IMR-90 (cell line): ENCODE measurements at regions of chr3 and their contacts with region 1.

Region 1: DNA sequence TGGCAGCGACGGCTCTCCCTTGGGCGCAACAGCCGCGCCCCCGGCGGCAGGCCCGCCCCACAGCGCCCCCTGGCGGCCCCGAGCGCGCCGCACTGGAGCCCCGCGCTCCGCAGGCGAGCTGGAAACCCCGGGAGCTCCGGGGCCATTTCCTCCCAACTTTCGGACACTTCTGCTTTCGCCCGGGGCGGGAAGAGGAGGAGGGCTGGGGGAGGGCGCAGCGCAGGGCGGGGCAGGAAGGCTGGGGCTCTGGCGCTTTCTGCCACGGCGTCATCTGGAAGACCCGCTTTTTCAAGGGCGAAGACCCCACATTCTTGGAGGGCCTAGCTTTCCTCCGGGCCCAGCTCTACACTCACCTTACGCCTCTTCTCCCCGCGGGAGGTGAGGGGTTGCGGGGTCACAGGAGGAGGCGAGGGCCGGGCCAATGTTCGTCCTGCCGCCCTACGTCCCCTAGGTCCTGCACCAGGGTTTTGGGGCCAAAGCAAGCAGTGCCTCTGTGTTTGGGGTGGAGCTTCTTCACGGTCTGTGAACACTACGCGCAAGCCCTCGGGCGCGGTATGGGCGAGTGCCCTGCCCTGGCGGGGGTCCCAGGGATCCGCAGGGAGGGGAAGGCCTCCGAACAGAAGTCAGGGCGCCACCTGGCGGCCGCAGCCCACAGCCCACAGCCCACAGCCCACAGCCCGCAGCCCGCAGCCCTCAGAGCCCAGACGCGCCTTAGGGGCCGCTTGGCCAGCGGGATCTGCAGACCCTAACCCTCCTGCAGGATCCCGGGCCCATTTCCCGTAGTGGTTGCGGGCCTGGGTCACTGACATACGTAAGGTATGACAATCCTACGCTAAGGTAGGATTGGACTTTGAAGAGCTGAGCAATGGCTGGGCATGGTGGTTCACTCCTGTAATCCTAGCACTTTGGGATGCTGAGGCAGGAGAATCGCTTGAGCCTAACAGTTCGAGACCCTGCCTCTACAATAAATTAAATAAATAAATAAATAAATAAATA is 31.1 kb downstream of the FOXL2 start:
- DNase-seq: peak; percentile 83
- ATAC-seq: peak; percentile 92
- H3K4me3 ChIP-seq: peak overlapping the region; percentile 96
- H3K27ac ChIP-seq: peak overlapping the region; percentile 99
- H3K4me1 ChIP-seq: peaks cover 4% of the 10 kb centered on the region
- H3K27me3 ChIP-seq: no peaks in the 10 kb centered on the region
- CTCF ChIP-seq: peak; percentile 97
- POLR2A ChIP-seq: no peak
- RAD21 ChIP-seq: peak; percentile 80

Region 2: DNA sequence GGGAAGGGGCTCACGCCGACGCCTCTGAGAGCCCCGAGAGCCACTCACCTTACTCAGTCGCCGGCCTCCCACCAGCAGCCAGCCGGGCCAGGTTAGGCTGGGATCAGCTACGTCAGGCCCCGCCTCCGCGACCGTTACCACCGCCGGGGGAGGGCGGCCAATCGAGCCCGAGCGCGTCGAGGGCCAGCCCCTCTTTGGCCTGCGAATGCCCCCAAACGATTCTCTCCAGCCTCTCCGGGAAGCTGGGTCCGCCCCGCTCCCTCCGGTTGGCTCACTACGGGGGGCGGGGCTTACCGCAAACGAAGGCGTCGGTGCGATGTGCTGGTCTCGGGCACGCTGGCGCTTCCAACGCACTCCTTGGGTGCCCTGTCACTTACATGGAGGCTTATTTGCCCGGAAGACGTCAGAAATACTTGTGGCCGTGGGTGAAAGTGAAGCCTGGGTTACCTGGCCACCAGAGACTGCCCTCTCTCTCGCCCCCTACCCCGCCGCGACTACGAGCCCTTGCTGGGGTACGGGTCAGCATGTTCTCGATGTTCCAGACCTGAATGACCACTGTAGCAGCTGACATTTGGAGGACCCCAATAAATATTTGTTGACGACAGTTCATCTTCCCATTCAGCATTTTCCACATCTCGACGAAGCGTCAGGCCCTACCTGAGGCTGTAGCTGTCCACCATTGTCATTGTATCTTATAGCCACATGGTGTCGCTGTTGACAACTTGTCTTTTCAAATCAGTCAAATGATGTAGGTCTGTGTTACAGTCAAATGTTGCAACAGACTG is 321.5 kb before region 1 on chr3 and contains the start of gene CEP70:
- CTCF ChIA-PET with region 1: interaction called, 42 read pairs
- POLR2A ChIA-PET with region 1: no interaction called
- dilution Hi-C with region 1: no loop called
- in situ Hi-C with region 1: loop called (anchors 5 kb)
- intact Hi-C with region 1: loop called (anchors 1 kb)
- DNase-seq: peak; percentile 95
- ATAC-seq: peak; percentile 99
- H3K4me3 ChIP-seq: peak within 1 kb of the TSS; percentile 54
- H3K27ac ChIP-seq: peak within 1 kb of the TSS; percentile 58
- H3K4me1 ChIP-seq: no peaks in the 10 kb centered on the region
- H3K27me3 ChIP-seq: no peaks in the 10 kb centered on the region
- CTCF ChIP-seq: peak; percentile 89
- POLR2A ChIP-seq: peak; percentile 76
- RAD21 ChIP-seq: peak; percentile 83
- total RNA-seq, gene CEP70: 11.1 and 21.4 TPM in 2 replicates

Region 3: DNA sequence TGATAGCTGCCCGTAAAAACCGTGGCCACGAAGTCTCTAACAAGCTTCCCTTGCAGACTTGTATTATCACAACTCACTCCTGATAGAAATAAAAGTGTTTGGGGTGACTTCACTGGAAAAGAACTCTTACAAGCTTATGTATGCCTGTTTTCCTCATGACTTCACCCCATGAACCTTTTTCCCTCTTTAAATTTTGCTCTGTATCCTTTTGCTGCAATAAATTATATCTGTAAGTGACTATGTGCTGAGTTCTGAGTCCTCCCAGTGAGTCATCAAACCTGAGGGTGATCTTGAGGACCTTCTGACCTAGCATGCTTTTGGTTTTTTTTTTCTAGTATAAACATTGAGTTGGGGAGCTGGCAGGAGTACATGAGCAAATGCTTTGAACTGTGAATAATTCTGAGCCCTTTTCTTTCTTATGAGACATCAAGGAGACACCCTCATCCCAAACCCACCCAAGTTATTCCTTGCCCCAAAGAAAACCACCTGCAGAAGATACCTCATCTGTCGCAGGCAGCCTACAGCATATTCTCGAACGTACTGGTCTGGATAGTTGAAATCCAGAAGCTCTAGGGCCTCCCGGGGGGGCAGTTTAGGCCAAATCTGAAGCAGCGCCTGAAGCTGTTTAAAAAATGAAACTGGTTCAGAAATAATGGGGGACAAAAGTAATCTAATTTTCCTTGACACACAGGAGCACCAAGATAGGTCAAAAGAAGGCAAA is 221.4 kb before region 1 on chr3:
- CTCF ChIA-PET with region 1: interaction called, 94 read pairs
- POLR2A ChIA-PET with region 1: interaction called, 7 read pairs
- dilution Hi-C with region 1: no loop called
- in situ Hi-C with region 1: loop called (anchors 5 kb)
- intact Hi-C with region 1: loop called (anchors 1 kb)
- DNase-seq: peak; percentile 99
- ATAC-seq: peak; percentile 96
- H3K4me3 ChIP-seq: no peak overlapping the region
- H3K27ac ChIP-seq: peak overlapping the region; percentile 61
- H3K4me1 ChIP-seq: peaks cover 4% of the 10 kb centered on the region
- H3K27me3 ChIP-seq: no peaks in the 10 kb centered on the region
- CTCF ChIP-seq: no peak
- POLR2A ChIP-seq: no peak
- RAD21 ChIP-seq: no peak

Region 4: DNA sequence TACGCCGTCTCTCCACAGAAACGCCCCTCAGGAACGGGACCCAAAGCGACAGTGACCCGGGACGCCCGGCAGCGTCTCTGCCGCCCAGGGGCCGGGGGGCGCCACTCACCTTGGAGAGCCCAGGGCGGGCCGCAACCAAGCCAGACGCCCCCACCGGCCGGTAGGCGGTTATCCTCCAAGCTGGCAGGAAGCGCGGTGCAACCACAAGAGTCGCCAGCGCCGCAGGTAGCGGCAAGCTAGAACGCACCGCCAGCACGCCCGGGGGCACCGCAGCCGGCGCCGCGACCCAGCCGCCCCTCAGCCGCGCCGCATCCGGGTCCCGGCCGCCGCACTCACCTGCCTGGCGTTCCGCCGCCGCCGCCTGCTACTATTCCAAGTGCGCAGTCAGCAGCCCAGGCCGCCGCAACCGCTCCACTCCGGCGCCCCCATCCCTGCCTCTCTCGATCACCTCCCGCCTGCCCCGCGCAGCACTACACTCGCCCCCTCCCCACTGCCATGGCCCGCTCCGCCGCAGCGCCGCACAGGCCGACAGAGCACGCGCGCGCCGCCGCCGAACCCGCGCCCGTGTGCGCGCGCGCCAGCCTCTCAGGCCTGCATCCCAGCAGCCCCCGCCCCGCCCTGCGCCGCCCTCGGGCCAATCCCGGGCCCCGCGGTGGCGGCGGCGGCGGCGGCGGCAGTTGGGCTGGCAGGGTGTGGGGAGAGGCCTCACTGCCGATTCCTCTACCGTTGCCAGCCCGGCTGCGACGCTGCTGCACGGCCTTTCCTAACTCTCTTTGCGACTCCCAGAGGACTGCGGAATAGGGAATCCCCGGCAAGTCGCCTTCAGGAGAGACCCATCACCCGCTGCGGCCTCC is 81.2 kb before region 1 on chr3 and contains the start of gene PIK3CB:
- CTCF ChIA-PET with region 1: no interaction called
- POLR2A ChIA-PET with region 1: no interaction called
- dilution Hi-C with region 1: no loop called
- in situ Hi-C with region 1: no loop called
- intact Hi-C with region 1: loop called (anchors 1 kb)
- DNase-seq: peak; percentile 62
- ATAC-seq: peak; percentile 97
- H3K4me3 ChIP-seq: peak within 1 kb of the TSS; percentile 85
- H3K27ac ChIP-seq: peak within 1 kb of the TSS; percentile 83
- H3K4me1 ChIP-seq: peaks cover 1% of the 10 kb centered on the region; the same call in 1 of the 2 replicates
- H3K27me3 ChIP-seq: no peaks in the 10 kb centered on the region
- CTCF ChIP-seq: peak; percentile 15; the same call in 1 of the 2 replicates
- POLR2A ChIP-seq: peak; percentile 70
- RAD21 ChIP-seq: no peak
- total RNA-seq, gene PIK3CB: 6.3 and 7.5 TPM in 2 replicates

Region 5: DNA sequence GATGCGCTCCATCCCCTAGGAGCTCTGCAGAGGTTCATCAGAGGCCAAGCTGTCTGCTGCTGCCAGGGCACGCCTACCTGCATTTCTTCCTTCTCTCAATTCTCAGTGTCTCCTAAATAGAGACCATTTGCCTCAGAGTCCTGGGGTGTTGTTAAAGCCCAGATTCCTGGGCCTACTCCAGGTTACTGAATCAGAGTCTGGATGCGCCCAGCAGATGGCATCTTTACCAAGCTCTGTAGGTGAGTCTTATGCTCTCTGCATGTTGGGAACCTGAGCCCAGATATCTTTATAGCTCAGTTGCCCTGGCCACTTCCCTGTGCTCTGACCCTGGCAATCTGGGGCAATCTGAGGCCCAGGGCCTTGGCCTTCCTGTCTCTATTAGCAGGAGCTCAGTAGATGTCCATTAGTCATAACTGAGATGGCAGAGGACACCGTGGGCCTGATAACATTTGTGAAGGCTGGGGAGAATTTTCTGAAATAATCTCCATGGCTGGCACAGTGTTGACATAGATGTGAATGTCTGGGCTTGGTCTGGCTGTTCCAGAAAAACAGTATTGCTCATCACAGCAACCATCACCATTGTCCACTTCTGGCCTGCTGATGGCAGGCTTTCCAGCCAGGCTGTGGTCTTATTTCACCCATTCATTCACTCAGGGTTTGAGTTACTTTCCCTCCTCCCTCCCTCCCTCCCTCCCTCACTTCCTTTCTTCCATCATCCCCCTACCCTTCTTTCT is 637.0 kb after region 1 on chr3:
- CTCF ChIA-PET with region 1: no interaction called
- POLR2A ChIA-PET with region 1: no interaction called
- dilution Hi-C with region 1: no loop called
- in situ Hi-C with region 1: no loop called
- intact Hi-C with region 1: no loop called
- DNase-seq: no peak
- ATAC-seq: no peak
- H3K4me3 ChIP-seq: no peak overlapping the region
- H3K27ac ChIP-seq: no peak overlapping the region
- H3K4me1 ChIP-seq: no peaks in the 10 kb centered on the region
- H3K27me3 ChIP-seq: peaks cover 2% of the 10 kb centered on the region
- CTCF ChIP-seq: no peak
- POLR2A ChIP-seq: no peak
- RAD21 ChIP-seq: no peak